Activated CD4-positive, alpha-beta memory T cell treated with anti-CD3 and anti-CD28 coated beads for 36 hours (primary cell): ENCODE measurements at regions of chr10 and their contacts with region 1.

Region 1: GRCh38 chr10:93496322-93497041 is at the start of gene CEP55:
- DNase-seq: peak; percentile 98
- H3K4me3 Mint-ChIP-seq: peak within 1 kb of the TSS; percentile 90
- H3K27ac Mint-ChIP-seq: peak within 1 kb of the TSS; percentile 74
- H3K4me1 Mint-ChIP-seq: peaks cover 27% of the 10 kb centered on the region
- H3K27me3 Mint-ChIP-seq: no peaks in the 10 kb centered on the region
- total RNA-seq, gene CEP55: 88.0 to 91.3 TPM

Region 2: GRCh38 chr10:93509816-93510215 is 13.3 kb after region 1 on chr10:
- CTCF ChIA-PET with region 1: interaction called, 9 read pairs
- POLR2A ChIA-PET with region 1: interaction called, 9 read pairs
- intact Hi-C with region 1: loop called (anchors 1 kb)
- DNase-seq: no peak
- H3K4me3 Mint-ChIP-seq: no peak overlapping the region
- H3K27ac Mint-ChIP-seq: peak overlapping the region; percentile 38
- H3K4me1 Mint-ChIP-seq: peaks cover 30% of the 10 kb centered on the region
- H3K27me3 Mint-ChIP-seq: no peaks in the 10 kb centered on the region